ENCODE measurements at regions of chr1 and their contacts with region 1.

Region 1: GRCh38 chr1:159780583-159781582 is at the start of gene DUSP23:
- DNase-seq: peak; percentile 94
- H3K4me3 Mint-ChIP-seq: peak within 1 kb of the TSS; percentile 82
- H3K27ac Mint-ChIP-seq: peak within 1 kb of the TSS; percentile 63
- H3K4me1 Mint-ChIP-seq: peaks cover 7% of the 10 kb centered on the region
- H3K27me3 Mint-ChIP-seq: peaks cover 9% of the 10 kb centered on the region
- total RNA-seq, gene DUSP23: 22.4 and 23.4 TPM in 2 replicates

Region 2: DNA sequence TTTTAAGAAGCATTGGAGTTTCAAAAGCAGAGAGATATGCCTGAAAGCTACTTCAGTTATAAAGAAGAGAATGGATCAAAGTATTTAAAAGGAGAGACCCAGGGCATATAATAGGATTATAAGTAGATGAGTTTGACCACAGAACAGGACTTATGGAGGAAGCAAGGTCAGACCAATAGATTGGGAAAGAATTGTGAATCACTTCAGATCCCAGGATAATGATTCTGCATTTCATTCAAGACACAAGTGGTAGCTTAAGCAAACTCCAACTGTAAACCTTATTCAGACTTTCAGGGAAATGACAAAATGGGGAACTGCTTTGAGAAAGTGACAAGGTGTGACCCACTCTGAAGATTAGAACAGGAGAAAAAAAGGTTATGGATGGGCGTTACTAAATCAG is 226.2 kb before region 1 on chr1:
- intact Hi-C with region 1: no loop called
- DNase-seq: no peak
- H3K4me3 Mint-ChIP-seq: no peak overlapping the region
- H3K27ac Mint-ChIP-seq: no peak overlapping the region
- H3K4me1 Mint-ChIP-seq: no peaks in the 10 kb centered on the region
- H3K27me3 Mint-ChIP-seq: no peaks in the 10 kb centered on the region

Region 3: DNA sequence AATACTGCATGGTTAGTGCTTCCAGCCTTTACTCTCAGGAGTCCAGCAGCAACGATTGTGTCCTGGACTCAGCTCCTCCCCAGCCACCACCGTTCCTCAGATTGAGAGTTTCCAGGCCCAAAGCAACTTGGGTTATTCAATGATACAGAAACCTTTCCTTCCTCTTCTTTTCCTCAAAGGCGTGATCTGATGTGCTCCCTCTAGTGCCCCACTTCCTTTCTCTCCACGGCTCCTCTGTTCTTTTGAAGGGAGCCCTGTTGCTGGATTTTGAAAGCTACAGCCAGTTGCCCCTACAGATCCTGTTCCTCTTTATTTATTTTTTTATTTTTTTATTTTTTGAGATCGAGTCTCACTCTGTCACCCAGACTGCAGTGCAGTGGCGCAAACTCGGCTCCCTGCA is 80.6 kb before region 1 on chr1:
- intact Hi-C with region 1: no loop called
- DNase-seq: no peak
- H3K4me3 Mint-ChIP-seq: no peak overlapping the region
- H3K27ac Mint-ChIP-seq: no peak overlapping the region
- H3K4me1 Mint-ChIP-seq: no peaks in the 10 kb centered on the region
- H3K27me3 Mint-ChIP-seq: peaks cover 13% of the 10 kb centered on the region

Region 4: GRCh38 chr1:159763686-159764085 is 17.2 kb before region 1 on chr1:
- intact Hi-C with region 1: no loop called
- DNase-seq: no peak
- H3K4me3 Mint-ChIP-seq: no peak overlapping the region
- H3K27ac Mint-ChIP-seq: no peak overlapping the region
- H3K4me1 Mint-ChIP-seq: no peaks in the 10 kb centered on the region
- H3K27me3 Mint-ChIP-seq: peaks cover 5% of the 10 kb centered on the region

Region 5: DNA sequence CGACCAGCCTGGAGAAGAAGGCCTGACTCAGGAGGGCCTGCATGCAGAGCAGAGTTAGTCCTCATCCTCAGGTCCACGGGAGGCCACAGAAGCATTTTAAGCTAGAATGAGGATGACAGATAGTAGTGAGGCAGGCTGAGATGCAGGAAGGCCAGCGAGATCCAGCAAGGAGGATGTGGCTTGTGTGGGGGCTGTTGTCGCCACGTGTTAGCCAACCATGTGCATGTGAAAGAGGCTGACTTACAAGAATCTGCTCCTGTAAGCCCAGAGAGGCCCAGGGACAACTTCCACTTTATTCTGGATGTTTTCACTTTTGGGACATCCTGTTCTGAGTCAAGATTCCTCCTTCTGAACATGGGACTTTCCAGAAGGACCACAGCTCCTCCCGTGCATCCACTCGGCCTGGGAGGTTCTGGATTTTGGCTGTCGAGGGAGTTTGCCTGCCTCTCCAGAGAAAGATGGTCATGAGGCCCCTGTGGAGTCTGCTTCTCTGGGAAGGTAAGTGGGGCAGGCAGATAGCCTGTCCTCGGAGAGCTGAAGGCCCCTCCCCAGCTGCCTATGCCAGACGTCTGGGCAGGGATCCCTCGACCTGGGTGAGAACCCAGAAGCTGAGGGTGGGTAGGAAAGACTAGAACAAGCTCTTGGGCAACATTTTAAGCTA is 45.7 kb after region 1 on chr1 and contains the start of gene SLAMF8:
- intact Hi-C with region 1: loop called (anchors 1 kb)
- DNase-seq: peak; percentile 61
- H3K4me3 Mint-ChIP-seq: peak within 1 kb of the TSS; percentile 67
- H3K27ac Mint-ChIP-seq: peak within 1 kb of the TSS; percentile 69
- H3K4me1 Mint-ChIP-seq: peaks cover 54% of the 10 kb centered on the region
- H3K27me3 Mint-ChIP-seq: peaks cover 45% of the 10 kb centered on the region
- total RNA-seq, gene SLAMF8: 0.49 and 0.69 TPM in 2 replicates

Region 6: GRCh38 chr1:159891275-159892157 is 110.6 kb after region 1 on chr1:
- intact Hi-C with region 1: loop called (anchors 1 kb)
- DNase-seq: peak; percentile 64
- H3K4me3 Mint-ChIP-seq: no peak overlapping the region
- H3K27ac Mint-ChIP-seq: no peak overlapping the region
- H3K4me1 Mint-ChIP-seq: peaks cover 12% of the 10 kb centered on the region
- H3K27me3 Mint-ChIP-seq: peaks cover 17% of the 10 kb centered on the region

Region 7: DNA sequence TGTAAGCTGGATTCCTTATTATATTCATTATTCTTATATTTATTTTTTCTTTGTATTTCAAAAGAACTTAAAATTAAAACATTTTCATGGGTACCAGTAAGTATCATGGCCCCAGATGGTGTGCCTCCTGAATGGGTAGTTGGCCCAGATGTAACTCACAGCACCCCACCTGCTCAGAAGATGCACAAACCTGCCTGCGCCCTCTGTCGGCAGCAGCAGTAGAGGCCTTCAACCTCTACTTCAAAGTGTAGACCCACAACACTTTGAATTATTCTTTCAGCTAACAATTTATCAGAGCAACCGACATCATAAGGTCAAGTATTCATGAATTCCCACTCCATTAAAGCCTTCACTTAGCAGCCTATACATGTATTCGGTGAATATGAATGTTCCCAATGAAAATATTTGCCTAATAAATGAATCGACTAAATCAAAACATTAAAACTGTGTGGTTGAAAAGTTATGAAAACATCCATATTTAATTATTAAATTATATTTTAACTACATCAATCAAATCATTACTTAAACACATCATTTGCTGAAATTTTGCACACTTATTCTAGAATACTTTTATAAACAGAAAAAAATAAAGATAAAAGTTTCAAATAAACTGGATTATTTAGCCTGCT is 225.5 kb after region 1 on chr1:
- intact Hi-C with region 1: loop called (anchors 1 kb)
- DNase-seq: peak; percentile 55
- H3K4me3 Mint-ChIP-seq: no peak overlapping the region
- H3K27ac Mint-ChIP-seq: no peak overlapping the region
- H3K4me1 Mint-ChIP-seq: no peaks in the 10 kb centered on the region
- H3K27me3 Mint-ChIP-seq: peaks cover 18% of the 10 kb centered on the region

Measured in activated T-helper 1 cell treated with anti-CD3 and anti-CD28 coated beads, Interleukin-12 subunit alpha, Interleukin-12 subunit beta, Interleukin-2, Interleukin-4 antibody, amounts not matched to agents 30 ng/mL and 10 ng/mL and 1 ng/mL, durations not matched to agents 14 hours and 24 hours and 36 hours (primary cell).